Activated T-helper 2 cell treated with anti-CD3 and anti-CD28 coated beads, Interferon-gamma antibody, Interleukin-2, Interleukin-4, amounts not matched to agents 10 μg/mL and 5 μg/mL and 100 μg/mL, durations not matched to agents 14 hours and 24 hours and 36 hours (primary cell): ENCODE measurements at regions of chr3 and their contacts with region 1.

Region 1: DNA sequence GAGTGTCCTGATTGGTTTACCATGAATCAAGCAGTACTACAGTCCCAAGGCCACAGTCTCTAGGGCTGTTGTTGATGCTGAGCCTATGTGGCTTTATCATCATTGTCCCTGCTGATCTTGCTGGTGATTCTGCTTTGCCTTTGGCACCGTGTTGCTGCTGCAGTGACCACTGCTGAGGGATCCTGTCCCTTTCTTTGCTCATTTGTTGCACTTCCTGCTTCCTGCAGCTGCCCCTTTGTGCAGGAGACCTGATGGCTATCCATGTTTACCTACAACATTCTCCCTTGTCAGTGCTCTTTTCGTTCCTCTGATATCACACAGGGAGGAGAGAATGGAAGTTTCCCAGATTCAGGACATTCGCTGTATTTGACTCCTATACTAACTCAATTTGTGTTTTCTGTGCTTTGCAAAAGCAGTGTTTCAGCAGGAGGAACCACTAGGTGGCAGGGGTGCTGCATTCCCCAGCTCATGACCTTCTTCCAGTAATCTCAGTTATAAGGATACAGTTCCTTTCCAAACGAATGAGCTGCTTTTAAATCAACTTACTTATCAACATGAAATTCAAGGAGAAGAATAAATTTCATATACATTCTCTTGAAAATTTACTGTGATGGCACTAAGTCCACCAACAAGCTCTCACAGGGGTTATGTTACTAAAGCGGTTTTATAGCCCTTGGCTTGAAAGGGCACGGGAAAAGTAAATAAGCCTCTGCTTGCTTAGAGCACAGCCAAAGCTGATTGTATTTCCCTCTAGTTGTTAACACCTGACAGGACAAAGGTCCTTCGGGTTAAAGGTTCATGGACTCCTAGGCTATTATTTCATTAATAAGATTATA is 9.7 kb upstream of the THUMPD3 start:
- DNase-seq: peak; percentile 34
- H3K4me3 Mint-ChIP-seq: no peak overlapping the region
- H3K27ac Mint-ChIP-seq: no peak overlapping the region
- H3K4me1 Mint-ChIP-seq: peaks cover 23% of the 10 kb centered on the region
- H3K27me3 Mint-ChIP-seq: no peaks in the 10 kb centered on the region

Region 2: DNA sequence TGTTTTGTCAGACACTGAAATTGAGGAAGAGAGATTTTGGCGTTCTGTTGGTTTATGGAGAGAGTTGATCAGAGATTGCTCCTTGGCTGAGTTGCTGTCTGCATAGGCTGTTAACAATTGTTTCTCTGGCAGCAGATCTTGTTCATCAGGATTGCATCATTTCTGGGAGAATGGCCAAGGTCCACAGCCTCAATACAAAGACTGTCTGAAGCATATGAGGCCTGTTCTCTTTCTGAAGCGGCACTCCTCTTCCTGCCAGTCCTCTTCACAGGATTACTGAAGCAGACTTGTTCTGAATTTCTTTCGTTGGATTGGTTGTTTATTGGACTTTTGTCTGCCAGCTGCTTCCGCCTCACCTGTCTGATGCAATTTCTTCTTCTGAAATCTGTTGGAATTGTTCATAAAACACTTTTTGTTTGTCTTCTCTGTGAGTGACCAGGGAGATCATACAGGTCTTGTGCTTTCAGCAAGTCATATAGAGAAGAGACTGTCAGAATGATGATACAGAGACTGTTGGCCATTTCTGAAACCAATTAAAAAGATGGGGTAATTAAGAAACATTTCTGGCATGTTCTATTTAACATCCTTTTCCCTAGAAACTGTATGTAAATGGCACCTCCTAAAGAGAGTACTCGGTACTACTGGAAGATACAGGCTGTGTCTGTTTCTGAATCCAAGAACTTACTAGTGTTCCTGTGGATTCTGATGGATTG is 69.7 kb after region 1 on chr3:
- intact Hi-C with region 1: loop called (anchors 1 kb)
- DNase-seq: no peak
- H3K4me3 Mint-ChIP-seq: no peak overlapping the region
- H3K27ac Mint-ChIP-seq: peak overlapping the region; percentile 72
- H3K4me1 Mint-ChIP-seq: peaks cover 35% of the 10 kb centered on the region
- H3K27me3 Mint-ChIP-seq: no peaks in the 10 kb centered on the region

Region 3: GRCh38 chr3:9503283-9503682 is 150.1 kb after region 1 on chr3:
- intact Hi-C with region 1: loop called (anchors 2 kb)
- DNase-seq: peak; percentile 60
- H3K4me3 Mint-ChIP-seq: no peak overlapping the region
- H3K27ac Mint-ChIP-seq: no peak overlapping the region
- H3K4me1 Mint-ChIP-seq: peaks cover 2% of the 10 kb centered on the region
- H3K27me3 Mint-ChIP-seq: peaks cover 22% of the 10 kb centered on the region

Region 4: DNA sequence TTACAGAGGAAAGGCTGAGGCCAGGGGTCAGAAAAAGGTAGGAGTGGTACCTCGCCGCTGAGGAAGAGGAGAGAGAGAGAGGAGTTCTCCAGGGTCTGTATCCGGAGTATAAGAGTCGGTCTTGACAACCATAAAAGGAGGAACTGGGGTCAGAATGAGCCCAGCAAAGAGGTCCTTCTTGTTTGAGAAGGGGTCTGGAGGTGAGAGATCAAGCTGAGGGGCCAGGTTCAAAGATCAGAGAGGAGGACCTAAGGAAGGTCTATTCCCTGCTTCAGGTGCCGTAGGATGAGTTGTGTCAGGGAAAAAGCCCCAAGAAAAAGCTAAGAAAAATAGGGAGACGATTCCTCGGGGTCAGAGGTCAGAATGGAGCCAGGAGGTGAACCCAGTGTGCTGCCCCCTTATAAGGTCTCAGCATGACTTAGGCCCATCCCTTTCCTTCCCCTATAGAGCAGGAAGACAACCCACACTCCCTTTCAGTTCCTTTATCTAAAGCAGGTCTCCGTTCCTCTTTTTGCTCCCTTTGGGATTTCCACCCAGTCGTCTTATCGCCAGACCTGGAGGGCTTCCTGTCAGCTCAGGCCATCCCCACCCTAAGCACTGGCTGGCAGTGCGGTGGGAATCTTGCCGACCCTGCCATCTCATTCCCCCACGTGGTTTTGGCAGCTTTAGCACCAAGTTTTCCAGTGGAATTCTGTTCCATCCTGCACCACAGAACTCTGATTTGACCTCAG is 296.8 kb after region 1 on chr3:
- intact Hi-C with region 1: loop called (anchors 5 kb)
- DNase-seq: no peak
- H3K4me3 Mint-ChIP-seq: peak overlapping the region; percentile 93
- H3K27ac Mint-ChIP-seq: peak overlapping the region; percentile 84
- H3K4me1 Mint-ChIP-seq: peaks cover 11% of the 10 kb centered on the region
- H3K27me3 Mint-ChIP-seq: no peaks in the 10 kb centered on the region